PC-9 (cell line): ENCODE measurements at regions of chr9 and their contacts with region 1.

Region 1: GRCh38 chr9:27033823-27034403 is 28.4 kb upstream of the LRRC19 start:
- DNase-seq: peak in 1 of 2 experiments; percentile 39
- H3K4me3 ChIP-seq: no peak overlapping the region
- H3K27ac ChIP-seq: no peak overlapping the region
- H3K4me1 ChIP-seq: no peaks in the 10 kb centered on the region
- H3K27me3 ChIP-seq: no peaks in the 10 kb centered on the region
- CTCF ChIP-seq: peak; percentile 81

Region 2: GRCh38 chr9:26086396-26086795 is 947.5 kb before region 1 on chr9:
- CTCF ChIA-PET with region 1: no interaction called
- POLR2A ChIA-PET with region 1: no interaction called
- intact Hi-C with region 1: no loop called
- DNase-seq: no peak
- H3K4me3 ChIP-seq: no peak overlapping the region
- H3K27ac ChIP-seq: no peak overlapping the region
- H3K4me1 ChIP-seq: no peaks in the 10 kb centered on the region
- H3K27me3 ChIP-seq: no peaks in the 10 kb centered on the region
- CTCF ChIP-seq: no peak

Region 3: GRCh38 chr9:27184556-27185351 is 150.8 kb after region 1 on chr9:
- CTCF ChIA-PET with region 1: no interaction called
- POLR2A ChIA-PET with region 1: no interaction called
- intact Hi-C with region 1: loop called (anchors 10 kb)
- DNase-seq: no peak
- H3K4me3 ChIP-seq: no peak overlapping the region
- H3K27ac ChIP-seq: no peak overlapping the region
- H3K4me1 ChIP-seq: no peaks in the 10 kb centered on the region
- H3K27me3 ChIP-seq: no peaks in the 10 kb centered on the region
- CTCF ChIP-seq: no peak

Region 4: DNA sequence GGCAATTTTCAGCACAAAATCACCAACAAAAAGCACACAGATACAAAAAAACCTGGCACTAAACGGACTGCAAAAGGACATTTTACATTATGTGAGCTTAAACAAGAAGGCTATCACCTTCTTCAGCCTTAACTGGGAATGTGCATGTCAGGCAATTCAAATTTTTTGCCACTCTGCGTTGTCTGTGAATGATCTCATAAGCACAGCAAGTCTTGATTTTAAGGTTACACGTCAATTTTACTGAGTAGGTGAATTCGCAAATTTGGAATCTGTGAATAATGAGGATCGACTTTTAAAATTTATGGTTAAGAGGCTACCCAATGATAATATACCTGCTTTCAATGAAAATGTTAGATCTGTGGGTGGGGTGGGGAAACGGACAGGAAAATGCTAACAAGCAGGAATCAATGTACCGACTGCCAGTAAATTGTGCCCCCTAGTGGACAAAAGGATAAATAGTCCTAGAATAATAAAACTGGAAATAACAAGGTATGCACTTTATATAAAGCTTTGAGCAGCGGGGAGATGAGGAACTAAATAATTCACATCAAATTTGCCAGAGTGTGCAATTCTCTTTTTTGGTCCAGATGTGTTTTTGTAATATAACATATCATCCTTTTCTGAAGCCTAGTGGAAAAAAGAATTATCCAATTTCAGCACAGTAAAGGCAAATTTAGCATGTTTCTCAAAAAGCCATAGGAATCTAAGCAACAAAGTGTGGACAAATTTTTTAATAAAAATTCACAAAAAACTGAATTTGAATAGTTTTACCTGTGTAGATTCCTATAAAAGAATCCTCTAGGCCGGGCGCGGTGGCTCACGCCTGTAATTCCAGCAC is 242.5 kb after region 1 on chr9:
- CTCF ChIA-PET with region 1: no interaction called
- POLR2A ChIA-PET with region 1: no interaction called
- intact Hi-C with region 1: loop called (anchors 1 kb)
- DNase-seq: peak in 1 of 2 experiments; percentile 36
- H3K4me3 ChIP-seq: no peak overlapping the region
- H3K27ac ChIP-seq: no peak overlapping the region
- H3K4me1 ChIP-seq: no peaks in the 10 kb centered on the region
- H3K27me3 ChIP-seq: no peaks in the 10 kb centered on the region
- CTCF ChIP-seq: peak; percentile 77

Region 5: GRCh38 chr9:27548055-27548741 is 514.3 kb after region 1 on chr9:
- CTCF ChIA-PET with region 1: no interaction called
- POLR2A ChIA-PET with region 1: no interaction called
- intact Hi-C with region 1: loop called (anchors 5 kb)
- DNase-seq: peak in 1 of 2 experiments; percentile 36
- H3K4me3 ChIP-seq: no peak overlapping the region
- H3K27ac ChIP-seq: no peak overlapping the region
- H3K4me1 ChIP-seq: no peaks in the 10 kb centered on the region
- H3K27me3 ChIP-seq: no peaks in the 10 kb centered on the region
- CTCF ChIP-seq: peak; percentile 47